Cardiac septum (tissue), 1 donor: ENCODE measurements at regions of chr10 and their contacts with region 1.

Region 1: DNA sequence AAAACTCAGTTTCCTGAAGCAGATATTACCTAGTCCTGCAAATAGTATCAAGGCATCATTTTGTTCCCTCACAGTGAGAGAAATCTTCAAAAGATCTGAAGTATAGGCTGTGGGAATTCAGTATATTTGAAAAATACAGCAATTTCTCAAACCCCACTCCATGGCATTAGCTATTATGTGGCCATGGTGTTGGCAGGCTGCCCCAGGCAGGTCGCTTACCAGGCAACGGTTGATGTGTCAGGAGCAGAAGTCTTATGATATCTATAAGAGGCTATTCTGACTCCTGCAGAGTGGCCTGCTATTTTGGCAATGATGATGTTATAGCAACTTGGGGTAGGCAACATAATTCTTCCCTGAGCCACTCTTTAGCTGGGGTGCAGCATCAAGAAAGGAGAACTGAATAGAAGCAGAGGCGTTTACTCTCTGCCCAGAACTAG is 187.9 kb downstream of the PLXDC2 start:
- DNase-seq: no peak

Region 2: DNA sequence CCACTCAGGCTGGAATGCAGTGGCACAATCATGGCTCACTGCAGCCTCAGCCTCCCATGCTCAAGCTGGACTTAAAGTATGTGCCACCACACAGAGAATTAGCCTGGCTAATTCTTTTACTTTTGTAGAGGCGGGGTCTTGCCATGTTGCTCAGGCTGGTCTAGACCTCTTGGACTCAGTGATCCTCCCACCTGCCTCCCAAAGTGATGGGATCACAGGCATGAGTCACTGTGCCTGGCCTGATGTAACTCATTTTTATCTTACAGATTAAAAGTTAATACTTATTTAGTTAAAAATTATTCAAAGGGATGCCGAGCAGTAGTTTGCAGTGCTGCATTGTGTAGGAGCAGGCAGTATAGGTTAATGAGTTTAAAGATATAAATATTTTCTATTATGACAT is 200.4 kb before region 1 on chr10:
- intact Hi-C with region 1: no loop called
- DNase-seq: no peak

Region 3: DNA sequence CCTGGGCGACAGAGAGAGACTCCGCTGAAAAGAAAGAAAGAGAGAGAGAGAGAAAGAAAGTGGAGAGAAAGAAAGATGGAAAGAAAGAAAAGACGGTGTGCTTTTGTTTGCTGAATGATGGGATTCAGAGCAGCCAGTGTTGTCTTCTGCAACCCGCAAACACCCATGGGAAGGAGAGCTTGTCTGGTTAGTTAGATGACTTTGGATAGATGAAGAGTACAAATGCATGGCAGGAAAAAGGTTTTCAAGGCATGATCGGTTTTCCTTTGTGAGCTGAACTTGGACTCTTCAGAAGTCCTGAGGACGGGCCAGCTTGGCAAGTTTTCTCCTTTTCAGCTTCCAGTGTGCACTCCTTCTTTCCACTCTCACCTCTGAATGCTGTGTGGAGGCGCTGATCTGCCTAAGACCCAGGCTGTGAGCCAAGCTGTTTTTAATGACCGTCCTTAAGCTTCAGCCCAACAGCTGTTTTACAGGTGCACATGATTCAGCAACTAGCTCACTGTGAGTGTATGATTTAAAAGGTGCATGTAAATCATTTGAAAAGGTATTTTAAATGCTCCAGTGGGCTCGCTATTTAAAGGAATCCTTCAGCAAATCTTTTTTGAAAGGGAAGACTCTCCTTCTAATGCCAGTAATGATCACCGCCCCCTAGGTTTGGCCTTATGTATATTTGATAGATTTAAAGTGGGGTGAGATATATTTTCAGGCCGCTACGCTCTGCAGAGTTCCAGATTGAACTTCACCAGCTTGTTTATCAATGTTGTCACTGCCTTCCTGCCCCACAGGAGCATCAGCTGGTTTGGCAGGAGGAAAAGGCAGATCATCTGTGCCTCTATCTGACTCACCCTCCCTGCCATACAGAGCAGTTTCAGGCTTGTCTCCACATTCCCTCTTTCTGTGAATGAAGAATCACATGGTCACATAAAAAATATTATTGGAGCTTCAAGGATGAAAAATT is 72.9 kb before region 1 on chr10:
- intact Hi-C with region 1: loop called (anchors 5 kb)
- DNase-seq: no peak

Region 4: GRCh38 chr10:19958787-19959186 is 45.3 kb before region 1 on chr10:
- intact Hi-C with region 1: no loop called
- DNase-seq: no peak

Region 5: GRCh38 chr10:20195076-20195475 is 191.0 kb after region 1 on chr10:
- intact Hi-C with region 1: no loop called
- DNase-seq: no peak